ENCODE measurements at regions of chr7 and their contacts with region 1.

Region 1: GRCh38 chr7:120933475-120933874 is 17.1 kb upstream of the ING3 start:
- DNase-seq: no peak
- ATAC-seq: no peak
- H3K4me3 ChIP-seq: no peak overlapping the region
- H3K27ac ChIP-seq: no peak overlapping the region
- H3K4me1 ChIP-seq: no peaks in the 10 kb centered on the region
- H3K27me3 ChIP-seq: no peaks in the 10 kb centered on the region
- CTCF ChIP-seq: no peak
- POLR2A ChIP-seq: no peak

Region 2: GRCh38 chr7:120639884-120640283 is 293.6 kb before region 1 on chr7:
- intact Hi-C with region 1: no loop called
- DNase-seq: no peak
- ATAC-seq: no peak
- H3K4me3 ChIP-seq: no peak overlapping the region
- H3K27ac ChIP-seq: no peak overlapping the region
- H3K4me1 ChIP-seq: no peaks in the 10 kb centered on the region
- H3K27me3 ChIP-seq: no peaks in the 10 kb centered on the region
- CTCF ChIP-seq: no peak
- POLR2A ChIP-seq: no peak

Region 3: DNA sequence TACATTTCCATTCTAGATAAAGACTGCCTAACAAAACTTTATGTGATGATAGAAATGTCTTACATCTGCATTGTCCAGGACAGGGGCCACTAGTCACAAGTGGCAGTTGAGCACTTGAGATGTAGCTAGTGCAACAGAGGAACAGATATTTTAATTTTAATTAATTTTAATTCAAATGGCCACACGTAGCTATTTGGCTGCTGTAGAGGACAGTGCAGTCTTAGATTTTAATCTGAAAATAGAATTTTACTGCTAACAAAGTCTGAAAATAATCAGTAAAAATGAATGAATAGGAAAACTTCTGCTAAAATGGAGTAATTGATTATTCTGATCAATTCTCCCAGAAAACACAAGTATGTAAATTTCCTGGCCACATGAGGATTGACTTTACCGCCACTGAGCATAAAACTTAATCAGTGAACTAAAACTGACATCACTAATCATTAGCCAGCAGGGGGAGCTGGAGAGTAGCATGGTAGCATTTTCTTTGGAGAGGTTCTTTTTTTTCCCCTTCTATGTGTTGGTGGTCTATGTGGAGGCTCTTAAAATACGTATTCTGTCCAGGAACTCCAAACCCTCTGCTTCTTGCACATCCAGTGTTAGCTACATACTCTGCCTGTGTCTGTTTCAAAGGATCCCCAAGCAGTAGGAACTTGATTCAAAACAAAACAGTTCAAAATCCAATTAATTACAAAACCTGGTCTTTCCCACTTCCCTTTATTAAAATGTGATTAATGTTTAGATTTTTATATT is 127.7 kb before region 1 on chr7:
- intact Hi-C with region 1: loop called (anchors 5 kb)
- DNase-seq: peak; percentile 64 to 69 (median 66)
- ATAC-seq: peak; percentile 80
- H3K4me3 ChIP-seq: no peak overlapping the region
- H3K27ac ChIP-seq: no peak overlapping the region
- H3K4me1 ChIP-seq: peaks cover 25% of the 10 kb centered on the region
- H3K27me3 ChIP-seq: no peaks in the 10 kb centered on the region
- CTCF ChIP-seq: peak; percentile 70 to 88 (median 85)
- POLR2A ChIP-seq: no peak

Measured in body of pancreas (tissue), 4 donors.